ENCODE measurements at regions of chr2 and their contacts with region 1.

Region 1: GRCh38 chr2:38377050-38377828 is at the start of gene ATL2:
- DNase-seq: peak; percentile 94
- H3K4me3 Mint-ChIP-seq: peak within 1 kb of the TSS; percentile 94
- H3K27ac Mint-ChIP-seq: peak within 1 kb of the TSS; percentile 98
- H3K4me1 Mint-ChIP-seq: peaks cover 31% of the 10 kb centered on the region
- H3K27me3 Mint-ChIP-seq: no peaks in the 10 kb centered on the region
- CTCF ChIP-seq: no peak
- total RNA-seq, gene ATL2: 54.2 and 61.3 TPM in 2 replicates

Region 2: GRCh38 chr2:38352336-38352735 is 24.9 kb before region 1 on chr2:
- CTCF ChIA-PET with region 1: interaction called, 11 read pairs
- POLR2A ChIA-PET with region 1: interaction called, 4 read pairs
- intact Hi-C with region 1: no loop called
- DNase-seq: no peak
- H3K4me3 Mint-ChIP-seq: no peak overlapping the region
- H3K27ac Mint-ChIP-seq: no peak overlapping the region
- H3K4me1 Mint-ChIP-seq: peaks cover 5% of the 10 kb centered on the region
- H3K27me3 Mint-ChIP-seq: no peaks in the 10 kb centered on the region
- CTCF ChIP-seq: no peak

Region 3: DNA sequence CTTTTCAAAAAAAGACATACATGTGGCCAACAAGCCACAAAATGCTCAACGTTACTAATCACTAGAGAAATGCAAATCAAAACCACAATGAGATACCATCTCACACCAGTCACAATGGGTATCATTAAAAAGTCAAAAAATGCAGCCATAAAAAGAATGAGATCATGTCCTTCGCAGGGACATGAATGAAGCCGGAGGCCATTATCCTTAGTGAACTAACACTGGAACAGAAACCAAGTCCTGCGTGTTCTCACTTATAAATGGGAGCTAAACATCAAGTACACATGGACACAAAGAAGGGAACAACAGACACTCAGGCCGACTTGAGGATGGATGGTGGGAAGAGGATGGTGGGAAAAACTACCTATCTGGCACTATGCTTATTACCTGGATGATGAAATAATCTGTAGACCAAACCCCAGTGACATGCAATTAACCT is 17.7 kb after region 1 on chr2:
- CTCF ChIA-PET with region 1: interaction called, 5 read pairs
- POLR2A ChIA-PET with region 1: interaction called, 24 read pairs
- intact Hi-C with region 1: no loop called
- DNase-seq: peak; percentile 27
- H3K4me3 Mint-ChIP-seq: no peak overlapping the region
- H3K27ac Mint-ChIP-seq: no peak overlapping the region
- H3K4me1 Mint-ChIP-seq: peaks cover 24% of the 10 kb centered on the region
- H3K27me3 Mint-ChIP-seq: no peaks in the 10 kb centered on the region
- CTCF ChIP-seq: no peak

Region 4: GRCh38 chr2:38438883-38439612 is 61.8 kb after region 1 on chr2:
- CTCF ChIA-PET with region 1: interaction called, 41 read pairs
- POLR2A ChIA-PET with region 1: interaction called, 151 read pairs
- intact Hi-C with region 1: no loop called
- DNase-seq: no peak
- H3K4me3 Mint-ChIP-seq: no peak overlapping the region
- H3K27ac Mint-ChIP-seq: no peak overlapping the region
- H3K4me1 Mint-ChIP-seq: peaks cover 39% of the 10 kb centered on the region
- H3K27me3 Mint-ChIP-seq: no peaks in the 10 kb centered on the region
- CTCF ChIP-seq: no peak

Region 5: DNA sequence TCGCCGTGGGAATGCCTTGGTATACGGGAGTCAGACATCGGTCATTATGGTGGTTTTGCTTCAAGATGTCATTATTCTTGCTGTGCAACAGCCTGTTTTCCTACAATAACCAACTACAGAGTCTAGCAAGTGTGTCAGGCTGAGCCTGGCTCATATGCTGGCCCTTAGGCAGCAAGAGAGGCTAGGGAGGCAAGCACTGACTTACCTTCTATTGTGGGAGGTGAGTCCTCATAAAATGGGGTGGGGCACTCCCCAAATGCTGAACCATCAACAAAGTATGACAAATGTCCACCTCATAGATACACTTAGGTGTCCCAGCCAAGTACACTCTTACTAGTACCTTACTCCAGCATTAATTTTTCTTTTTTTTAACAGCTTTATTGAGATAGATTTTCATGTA is 76.8 kb after region 1 on chr2:
- CTCF ChIA-PET with region 1: interaction called, 41 read pairs
- POLR2A ChIA-PET with region 1: interaction called, 151 read pairs
- intact Hi-C with region 1: no loop called
- DNase-seq: no peak
- H3K4me3 Mint-ChIP-seq: no peak overlapping the region
- H3K27ac Mint-ChIP-seq: no peak overlapping the region
- H3K4me1 Mint-ChIP-seq: peaks cover 19% of the 10 kb centered on the region
- H3K27me3 Mint-ChIP-seq: no peaks in the 10 kb centered on the region
- CTCF ChIP-seq: no peak

Region 6: GRCh38 chr2:38508311-38509039 is 131.2 kb after region 1 on chr2:
- CTCF ChIA-PET with region 1: interaction called, 36 read pairs
- POLR2A ChIA-PET with region 1: interaction called, 50 read pairs
- intact Hi-C with region 1: loop called (anchors 1 kb)
- DNase-seq: peak; percentile 95
- H3K4me3 Mint-ChIP-seq: no peak overlapping the region
- H3K27ac Mint-ChIP-seq: no peak overlapping the region
- H3K4me1 Mint-ChIP-seq: peaks cover 34% of the 10 kb centered on the region
- H3K27me3 Mint-ChIP-seq: no peaks in the 10 kb centered on the region
- CTCF ChIP-seq: peak; percentile 51

Region 7: GRCh38 chr2:38602732-38603401 is 225.6 kb after region 1 on chr2 and contains the start of gene HNRNPLL:
- CTCF ChIA-PET with region 1: interaction called, 3 read pairs
- POLR2A ChIA-PET with region 1: interaction called, 10 read pairs
- intact Hi-C with region 1: no loop called
- DNase-seq: peak; percentile 98
- H3K4me3 Mint-ChIP-seq: peak within 1 kb of the TSS; percentile 82
- H3K27ac Mint-ChIP-seq: peak within 1 kb of the TSS; percentile 94
- H3K4me1 Mint-ChIP-seq: peaks cover 18% of the 10 kb centered on the region
- H3K27me3 Mint-ChIP-seq: no peaks in the 10 kb centered on the region
- CTCF ChIP-seq: no peak
- total RNA-seq, gene HNRNPLL: 43.4 and 57.7 TPM in 2 replicates

Measured in MCF 10A (cell line).